ENCODE measurements at regions of chr1 and their contacts with region 1.

Region 1: DNA sequence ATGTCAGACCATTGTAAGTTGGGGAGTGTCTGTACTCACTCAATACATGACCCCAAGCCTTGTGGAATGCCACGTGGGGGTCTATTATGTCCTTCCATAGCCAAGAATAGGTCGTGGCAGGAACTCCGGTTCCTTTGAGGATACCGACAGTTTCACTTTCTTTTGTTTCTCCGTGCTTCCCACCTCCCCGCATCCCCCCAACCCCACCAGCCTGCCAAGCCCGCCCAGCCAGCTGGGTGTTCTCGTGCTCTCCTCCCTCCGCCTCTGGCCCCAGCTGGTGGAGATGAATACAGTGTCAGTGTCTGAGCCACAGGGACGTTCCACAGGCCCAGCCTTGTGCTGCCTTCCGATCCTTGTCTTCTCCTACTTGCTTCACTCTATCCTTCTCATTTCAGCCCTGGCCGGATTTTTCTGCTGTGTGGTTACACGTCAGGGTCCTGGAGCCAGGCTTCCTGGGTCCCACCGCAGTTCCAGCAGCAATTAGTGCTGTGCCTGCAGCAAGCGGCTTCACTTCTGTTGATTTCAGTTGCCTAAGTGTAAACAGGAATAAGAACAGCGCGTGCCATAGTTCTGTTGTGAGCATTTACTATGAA is 4.1 kb upstream of the AGTRAP start:
- DNase-seq: peak; percentile 67 to 97 (median 83)

Region 2: GRCh38 chr1:11805447-11806306 is 73.9 kb after region 1 on chr1 and contains the starts of genes CLCN6 and MTHFR:
- intact Hi-C with region 1: loop called (anchors 2 kb)
- DNase-seq: peak; percentile 98 to 100 (median 99)

Region 3: DNA sequence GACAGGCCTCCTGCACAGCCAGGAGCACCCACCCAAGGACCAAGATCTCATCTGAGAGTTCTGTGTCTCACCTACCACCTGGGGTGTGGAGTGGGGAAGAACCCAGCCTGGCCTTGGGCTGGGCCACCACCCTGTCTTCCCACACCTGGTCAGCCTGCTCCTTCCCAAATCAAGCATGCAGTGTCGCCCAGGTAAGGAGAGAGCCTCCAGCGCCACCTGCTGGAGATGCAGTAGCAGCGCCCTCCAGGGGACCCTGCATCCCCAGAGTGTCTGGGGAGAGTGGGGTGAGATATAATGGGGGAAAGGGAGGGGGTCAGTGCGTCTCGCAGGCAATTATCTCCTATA is 162.1 kb after region 1 on chr1:
- intact Hi-C with region 1: no loop called
- DNase-seq: peak in 8 of 10 donors; percentile 51 to 94 (median 64)

Measured in posterior cingulate gyrus (tissue), 11 donors.